HEK293T (cell line): ENCODE measurements at regions of chr14 and their contacts with region 1.

Region 1: GRCh38 chr14:99393047-99393655 is 87.5 kb downstream of the SETD3 start:
- DNase-seq: peak; percentile 68

Region 2: DNA sequence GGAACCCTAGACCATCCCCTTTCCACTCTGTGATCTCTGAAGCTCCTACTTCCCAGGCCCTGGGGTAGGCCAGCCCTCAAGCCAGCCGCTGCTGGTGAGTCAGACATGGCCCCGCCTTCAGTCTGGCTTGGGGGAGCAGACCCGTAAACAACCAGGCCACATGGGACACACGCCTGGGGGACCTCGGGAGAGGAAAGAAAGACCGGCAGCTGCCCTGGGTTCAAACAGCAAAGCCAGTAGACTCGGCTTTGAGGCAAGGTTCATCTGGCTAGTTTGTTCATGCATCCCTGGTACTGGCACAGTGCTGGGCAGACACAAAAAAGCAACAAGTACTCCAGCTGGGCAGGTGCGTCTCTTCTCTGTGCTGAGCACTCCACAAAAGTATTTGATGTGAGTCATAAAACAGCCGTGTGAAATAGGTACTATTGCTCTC is 14.4 kb before region 1 on chr14:
- CTCF ChIA-PET with region 1: interaction called, 22 read pairs
- POLR2A ChIA-PET with region 1: no interaction called
- DNase-seq: no peak

Region 3: GRCh38 chr14:99408286-99408970 is 15.3 kb after region 1 on chr14:
- CTCF ChIA-PET with region 1: interaction called, 18 read pairs
- POLR2A ChIA-PET with region 1: interaction called, 3 read pairs
- DNase-seq: no peak